CD4-positive, alpha-beta T cell (primary cell): ENCODE measurements at regions of chr15 and their contacts with region 1.

Region 1: DNA sequence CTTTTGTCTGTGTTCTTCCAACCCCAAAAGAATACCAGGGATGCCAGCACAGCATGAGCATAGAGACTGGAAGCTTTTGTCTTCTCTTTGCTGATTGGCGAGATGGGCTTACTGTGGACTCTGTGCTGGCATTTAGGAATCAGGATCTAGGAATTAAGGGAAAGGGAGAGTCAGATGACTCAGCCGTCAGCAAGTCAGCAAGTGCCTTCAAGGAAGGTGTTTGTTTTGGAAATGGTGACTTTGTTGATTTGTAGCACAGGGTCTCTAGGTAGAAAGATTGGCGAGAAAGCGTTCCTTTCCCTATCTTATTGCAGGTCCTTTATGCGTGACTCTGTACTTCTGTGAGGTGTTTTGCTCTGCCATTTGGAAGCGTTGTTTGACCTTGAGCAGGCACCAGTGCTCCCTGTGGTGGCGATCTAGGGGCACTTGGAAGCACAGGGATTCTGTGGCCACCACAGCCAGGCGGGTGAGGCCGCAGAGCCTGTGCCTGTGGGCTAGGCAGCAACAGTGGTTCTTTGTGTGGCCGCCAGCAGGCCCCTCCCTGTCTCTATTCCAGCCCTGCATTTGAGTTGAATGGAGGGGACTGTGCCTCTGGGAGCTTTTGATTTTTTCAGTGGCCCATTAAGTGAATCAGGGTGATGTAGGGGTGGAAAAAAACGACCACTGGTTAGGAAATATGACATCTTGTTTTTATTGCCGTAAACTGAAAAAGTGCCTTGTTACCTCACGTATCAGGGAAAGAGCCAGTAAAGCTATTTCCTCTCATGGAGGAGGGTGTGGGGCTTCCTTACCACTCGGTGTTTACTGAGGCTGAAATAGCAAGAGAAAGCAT is 19.0 kb downstream of the FAN1 start:
- DNase-seq: no peak
- ATAC-seq: no peak
- H3K4me3 ChIP-seq: no peak overlapping the region
- H3K4me3 Mint-ChIP-seq: no peak overlapping the region
- H3K27ac ChIP-seq: no peak overlapping the region
- H3K27ac Mint-ChIP-seq: no peak overlapping the region
- H3K4me1 ChIP-seq: no peaks in the 10 kb centered on the region
- H3K4me1 Mint-ChIP-seq: no peaks in the 10 kb centered on the region
- H3K27me3 ChIP-seq: no peaks in the 10 kb centered on the region
- H3K27me3 Mint-ChIP-seq: no peaks in the 10 kb centered on the region
- CTCF ChIP-seq: no peak

Region 2: GRCh38 chr15:30670056-30670455 is 252.6 kb before region 1 on chr15:
- CTCF ChIA-PET with region 1: no interaction called
- POLR2A ChIA-PET with region 1: no interaction called
- intact Hi-C with region 1: loop called in 1 of 2 experiments (anchors 10 kb)
- DNase-seq: no peak
- ATAC-seq: no peak
- H3K4me3 ChIP-seq: no peak overlapping the region
- H3K4me3 Mint-ChIP-seq: no peak overlapping the region
- H3K27ac ChIP-seq: no peak overlapping the region
- H3K27ac Mint-ChIP-seq: no peak overlapping the region
- H3K4me1 ChIP-seq: no peaks in the 10 kb centered on the region
- H3K4me1 Mint-ChIP-seq: no peaks in the 10 kb centered on the region
- H3K27me3 ChIP-seq: no peaks in the 10 kb centered on the region
- H3K27me3 Mint-ChIP-seq: no peaks in the 10 kb centered on the region
- CTCF ChIP-seq: no peak

Region 3: GRCh38 chr15:30903497-30904201 is 19.0 kb before region 1 on chr15 and contains the start of gene FAN1:
- CTCF ChIA-PET with region 1: no interaction called
- POLR2A ChIA-PET with region 1: interaction called, 3 read pairs
- intact Hi-C with region 1: loop called in 1 of 2 experiments (anchors 2 kb)
- DNase-seq: peak; percentile 58 to 83 (median 72)
- ATAC-seq: peak; percentile 87
- H3K4me3 ChIP-seq: peak within 1 kb of the TSS; percentile 90
- H3K4me3 Mint-ChIP-seq: peak within 1 kb of the TSS; percentile 98
- H3K27ac ChIP-seq: no peak within 1 kb of the TSS
- H3K27ac Mint-ChIP-seq: peak within 1 kb of the TSS; percentile 74
- H3K4me1 ChIP-seq: peaks cover 13% of the 10 kb centered on the region
- H3K4me1 Mint-ChIP-seq: peaks cover 44% of the 10 kb centered on the region
- H3K27me3 ChIP-seq: no peaks in the 10 kb centered on the region
- H3K27me3 Mint-ChIP-seq: no peaks in the 10 kb centered on the region
- CTCF ChIP-seq: no peak
- total RNA-seq, gene FAN1: 15.3 to 15.9 TPM